ENCODE measurements at regions of chr12 and their contacts with region 1.

Region 1: GRCh38 chr12:120356567-120357030 is 12.4 kb downstream of the MSI1 start:
- DNase-seq: peak; percentile 85
- ATAC-seq: peak; percentile 99
- H3K4me3 Mint-ChIP-seq: no peak overlapping the region
- H3K27ac Mint-ChIP-seq: no peak overlapping the region
- H3K4me1 Mint-ChIP-seq: peaks cover 1% of the 10 kb centered on the region
- H3K27me3 Mint-ChIP-seq: peaks cover 22% of the 10 kb centered on the region
- CTCF ChIP-seq: peak; percentile 92

Region 2: DNA sequence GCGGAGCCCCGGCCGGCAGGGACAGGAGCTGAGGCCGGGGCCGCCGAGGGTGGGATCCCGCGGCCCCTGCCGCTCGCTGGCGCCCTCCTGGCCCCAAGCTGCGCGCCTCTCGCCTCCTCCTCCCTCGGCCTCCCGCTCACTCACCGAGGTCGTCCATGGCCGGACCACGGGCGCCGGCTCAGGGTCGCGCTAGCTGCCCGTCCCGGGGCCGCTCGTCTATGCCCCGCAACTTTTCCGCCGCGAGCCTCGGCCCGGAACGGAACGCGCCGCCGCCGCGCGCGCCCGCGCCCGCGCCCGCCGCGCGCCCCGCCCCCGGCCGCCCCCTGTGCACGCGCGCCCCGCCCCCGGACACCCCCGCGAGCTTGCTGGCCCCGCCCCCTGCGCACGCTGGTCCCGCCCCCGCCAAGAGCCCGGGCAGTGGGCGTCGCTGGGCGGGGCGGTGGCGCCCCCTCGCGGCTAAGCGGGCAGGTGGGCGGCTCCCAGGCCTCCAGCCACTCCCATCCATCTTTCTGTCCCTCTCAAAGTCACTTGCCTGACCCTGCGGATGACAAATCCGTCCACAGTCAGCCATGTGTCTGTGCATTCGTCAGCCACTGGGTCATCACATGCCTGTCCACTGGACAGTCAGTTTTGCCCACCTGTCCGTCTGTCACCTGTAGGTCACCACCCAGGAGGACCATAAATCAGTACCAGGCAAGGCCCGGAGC is 91.0 kb before region 1 on chr12 and contains the start of gene PXN:
- CTCF ChIA-PET with region 1: no interaction called
- POLR2A ChIA-PET with region 1: no interaction called
- intact Hi-C with region 1: no loop called
- DNase-seq: peak; percentile 88
- ATAC-seq: peak; percentile 82
- H3K4me3 Mint-ChIP-seq: peak within 1 kb of the TSS; percentile 78
- H3K27ac Mint-ChIP-seq: peak within 1 kb of the TSS; percentile 79
- H3K4me1 Mint-ChIP-seq: peaks cover 45% of the 10 kb centered on the region
- H3K27me3 Mint-ChIP-seq: no peaks in the 10 kb centered on the region
- CTCF ChIP-seq: peak; percentile 71
- total RNA-seq, gene PXN: 40.2 to 45.3 TPM

Region 3: GRCh38 chr12:120314220-120314619 is 42.4 kb before region 1 on chr12:
- CTCF ChIA-PET with region 1: no interaction called
- POLR2A ChIA-PET with region 1: no interaction called
- intact Hi-C with region 1: no loop called
- DNase-seq: no peak
- ATAC-seq: no peak
- H3K4me3 Mint-ChIP-seq: no peak overlapping the region
- H3K27ac Mint-ChIP-seq: no peak overlapping the region
- H3K4me1 Mint-ChIP-seq: peaks cover 10% of the 10 kb centered on the region
- H3K27me3 Mint-ChIP-seq: no peaks in the 10 kb centered on the region
- CTCF ChIP-seq: peak; percentile 31

Region 4: GRCh38 chr12:120367233-120367923 is 10.8 kb after region 1 on chr12:
- CTCF ChIA-PET with region 1: interaction called, 19 read pairs
- POLR2A ChIA-PET with region 1: interaction called, 6 read pairs
- intact Hi-C with region 1: no loop called
- DNase-seq: peak; percentile 31
- ATAC-seq: peak; percentile 45
- H3K4me3 Mint-ChIP-seq: peak overlapping the region; percentile 58
- H3K27ac Mint-ChIP-seq: no peak overlapping the region
- H3K4me1 Mint-ChIP-seq: peaks cover 11% of the 10 kb centered on the region
- H3K27me3 Mint-ChIP-seq: peaks cover 67% of the 10 kb centered on the region
- CTCF ChIP-seq: peak; percentile 58

Region 5: DNA sequence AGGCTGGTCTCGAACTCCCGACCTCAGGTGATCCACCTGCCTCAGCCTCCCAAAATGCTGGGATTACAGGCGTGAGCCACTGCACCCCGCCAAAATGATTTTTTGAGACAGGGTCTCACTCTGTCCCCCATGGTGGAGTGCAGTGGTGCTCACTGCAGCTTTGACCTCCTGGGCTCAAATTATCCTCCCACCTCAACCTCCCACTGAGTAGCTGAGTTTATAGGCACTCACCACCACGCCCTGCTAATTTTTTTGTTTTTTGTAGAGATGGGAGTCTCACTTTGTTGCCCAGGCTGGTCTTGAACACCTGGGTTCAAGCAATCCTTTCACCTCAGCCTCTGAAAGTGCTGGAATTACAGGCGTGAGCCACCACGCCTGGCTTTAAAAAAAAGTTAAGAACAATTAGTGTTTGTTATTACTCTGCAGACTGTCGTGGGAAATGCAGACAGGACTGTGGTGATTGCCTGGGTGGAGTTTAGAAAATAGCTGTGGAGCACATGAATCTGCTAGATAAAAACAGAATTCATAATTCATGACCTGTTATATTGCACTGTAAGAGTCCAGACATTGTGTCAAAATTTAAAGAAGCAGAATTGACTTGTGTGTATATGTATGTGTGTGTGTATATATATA is 72.1 kb after region 1 on chr12:
- CTCF ChIA-PET with region 1: interaction called, 25 read pairs
- POLR2A ChIA-PET with region 1: no interaction called
- intact Hi-C with region 1: loop called (anchors 1 kb)
- DNase-seq: no peak
- ATAC-seq: no peak
- H3K4me3 Mint-ChIP-seq: no peak overlapping the region
- H3K27ac Mint-ChIP-seq: no peak overlapping the region
- H3K4me1 Mint-ChIP-seq: peaks cover 10% of the 10 kb centered on the region
- H3K27me3 Mint-ChIP-seq: peaks cover 6% of the 10 kb centered on the region
- CTCF ChIP-seq: no peak

Measured in activated CD8-positive, alpha-beta T cell treated with anti-CD3 and anti-CD28 coated beads for 36 hours (primary cell).